Sciatic nerve (tissue), 2 donors: ENCODE measurements at regions of chr6 and their contacts with region 1.

Region 1: GRCh38 chr6:79813854-79814709 is 133.3 kb downstream of the ELOVL4 start:
- DNase-seq: peak; percentile 89
- ATAC-seq: peak; percentile 80

Region 2: GRCh38 chr6:79536954-79537747 is 276.9 kb before region 1 on chr6 and contains the start of gene LCA5:
- intact Hi-C with region 1: no loop called
- DNase-seq: peak; percentile 94
- ATAC-seq: peak; percentile 99
- total RNA-seq, gene LCA5: 11.0 TPM

Region 3: DNA sequence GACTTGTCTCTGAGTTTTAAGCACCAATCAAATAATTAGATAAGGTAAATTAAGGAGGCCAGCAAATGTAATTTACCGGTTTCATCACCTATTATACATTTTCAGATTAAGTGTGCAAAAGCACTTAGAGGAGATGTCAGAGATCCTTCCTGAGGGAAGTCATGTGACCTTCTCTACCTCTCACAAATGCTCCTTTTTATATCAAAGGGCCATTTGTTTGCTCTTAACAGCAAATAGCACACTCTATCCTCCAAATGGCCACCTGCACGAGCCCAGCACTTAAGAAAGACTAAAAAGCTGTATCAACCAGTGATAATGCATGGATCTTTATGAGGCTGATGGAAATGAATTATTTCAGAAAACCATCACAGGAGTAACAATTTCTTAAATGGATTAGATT is 16.2 kb before region 1 on chr6:
- intact Hi-C with region 1: loop called (anchors 2 kb)
- DNase-seq: no peak
- ATAC-seq: no peak

Region 4: DNA sequence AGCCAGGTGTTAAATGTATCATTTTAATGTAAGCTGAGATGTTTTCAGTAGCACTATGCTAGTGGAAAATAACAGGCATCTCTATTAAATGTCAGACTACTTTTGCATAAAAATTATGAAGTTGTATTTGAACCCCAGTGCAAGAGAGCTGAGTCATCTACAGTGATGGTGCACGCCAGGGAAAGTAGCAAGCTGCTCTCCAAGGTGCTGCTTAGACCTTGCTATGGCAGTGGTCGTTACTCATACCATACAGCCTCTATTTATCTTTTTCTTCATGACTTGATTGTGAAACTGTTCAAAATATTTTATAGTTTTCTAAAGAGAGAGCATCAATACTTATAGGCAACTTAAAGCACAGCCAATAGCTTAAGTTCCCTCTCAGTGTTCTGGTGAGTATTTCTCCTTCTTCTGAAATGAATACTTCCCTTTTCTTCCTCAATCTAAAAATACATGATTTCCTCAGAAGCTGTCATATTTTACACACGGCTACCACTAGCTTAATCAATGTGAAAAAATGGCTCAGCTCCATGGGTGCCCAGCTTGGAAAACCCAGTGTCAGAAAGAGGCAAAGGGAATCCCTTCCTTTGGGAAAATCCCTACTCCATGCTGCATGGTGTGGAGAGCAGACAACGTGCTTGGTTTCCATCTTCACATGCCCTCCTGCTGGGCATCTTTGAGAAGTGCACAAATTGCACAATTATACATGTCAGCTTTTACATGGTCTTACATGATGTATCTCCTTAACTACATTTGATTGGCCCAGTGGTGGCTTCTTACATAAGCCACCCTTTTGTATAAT is 27.7 kb after region 1 on chr6:
- intact Hi-C with region 1: no loop called
- DNase-seq: no peak
- ATAC-seq: no peak

Region 5: GRCh38 chr6:79913369-79913768 is 99.3 kb after region 1 on chr6:
- intact Hi-C with region 1: no loop called
- DNase-seq: no peak
- ATAC-seq: no peak